ENCODE measurements at regions of chr2 and their contacts with region 1.

Region 1: DNA sequence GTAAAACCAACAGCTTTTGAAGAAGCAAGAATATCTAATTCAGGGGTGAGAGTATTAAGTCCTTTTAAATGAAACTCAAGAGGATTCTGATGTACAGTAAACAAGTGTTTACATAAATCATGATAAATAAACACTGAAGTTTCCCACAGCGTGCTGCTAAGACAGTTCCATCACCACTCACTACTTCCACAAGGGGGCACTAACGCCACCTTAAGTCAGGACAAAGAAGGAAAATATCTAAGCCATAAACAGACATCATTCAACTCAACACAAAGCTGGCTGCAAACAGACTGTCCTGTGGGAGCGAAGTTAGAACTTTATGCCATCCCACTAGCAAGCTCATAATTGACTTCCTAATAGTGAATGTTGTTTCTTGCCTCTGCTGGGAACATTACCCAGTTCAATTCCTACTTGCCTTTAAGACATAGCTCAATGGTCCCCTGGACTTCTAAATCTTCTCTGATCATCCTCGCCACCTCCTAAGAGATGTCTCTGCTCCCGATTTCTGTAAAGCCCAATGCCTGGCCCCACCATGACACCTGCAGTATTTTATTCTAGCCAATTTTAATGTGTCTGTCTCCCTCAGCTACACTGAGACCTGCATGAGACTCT is 36.5 kb downstream of the MRPL44 start:
- DNase-seq: peak; percentile 52
- H3K4me3 ChIP-seq: no peak overlapping the region
- CTCF ChIP-seq: peak; percentile 76

Region 2: GRCh38 chr2:223389624-223390023 is 604.1 kb before region 1 on chr2:
- CTCF ChIA-PET with region 1: no interaction called
- POLR2A ChIA-PET with region 1: no interaction called
- DNase-seq: no peak
- H3K4me3 ChIP-seq: no peak overlapping the region
- CTCF ChIP-seq: no peak

Region 3: GRCh38 chr2:223884399-223884798 is 109.3 kb before region 1 on chr2:
- CTCF ChIA-PET with region 1: no interaction called
- POLR2A ChIA-PET with region 1: no interaction called
- DNase-seq: no peak
- H3K4me3 ChIP-seq: no peak overlapping the region
- CTCF ChIP-seq: no peak

Region 4: GRCh38 chr2:223970343-223971128 is 23.2 kb before region 1 on chr2:
- CTCF ChIA-PET with region 1: interaction called, 133 read pairs
- POLR2A ChIA-PET with region 1: no interaction called
- DNase-seq: no peak
- H3K4me3 ChIP-seq: no peak overlapping the region
- CTCF ChIP-seq: peak; percentile 65

Region 5: GRCh38 chr2:224008702-224009261 is 15.1 kb after region 1 on chr2:
- CTCF ChIA-PET with region 1: interaction called, 99 read pairs
- POLR2A ChIA-PET with region 1: interaction called, 3 read pairs
- DNase-seq: no peak
- H3K4me3 ChIP-seq: no peak overlapping the region
- CTCF ChIP-seq: no peak

Region 6: GRCh38 chr2:224031358-224031970 is 37.7 kb after region 1 on chr2:
- CTCF ChIA-PET with region 1: interaction called, 14 read pairs
- POLR2A ChIA-PET with region 1: interaction called, 3 read pairs
- DNase-seq: no peak
- H3K4me3 ChIP-seq: no peak overlapping the region
- CTCF ChIP-seq: no peak

Region 7: GRCh38 chr2:224145751-224146355 is 152.1 kb after region 1 on chr2:
- CTCF ChIA-PET with region 1: interaction called, 19 read pairs
- POLR2A ChIA-PET with region 1: no interaction called
- DNase-seq: peak; percentile 47
- H3K4me3 ChIP-seq: no peak overlapping the region
- CTCF ChIP-seq: no peak

Region 8: GRCh38 chr2:224278531-224278930 is 284.8 kb after region 1 on chr2:
- CTCF ChIA-PET with region 1: interaction called, 414 read pairs
- POLR2A ChIA-PET with region 1: no interaction called
- DNase-seq: peak; percentile 33
- H3K4me3 ChIP-seq: no peak overlapping the region
- CTCF ChIP-seq: peak; percentile 14

Region 9: GRCh38 chr2:224585205-224586088 is 591.7 kb after region 1 on chr2 and contains the start of gene CUL3:
- CTCF ChIA-PET with region 1: no interaction called
- POLR2A ChIA-PET with region 1: no interaction called
- DNase-seq: peak; percentile 85
- H3K4me3 ChIP-seq: peak within 1 kb of the TSS; percentile 83
- CTCF ChIP-seq: no peak

Measured in AG04449 (cell line).